AG04449 (cell line): ENCODE measurements at regions of chr9 and their contacts with region 1.

Region 1: GRCh38 chr9:70602321-70603019 is 188.0 kb upstream of the KLF9 start:
- DNase-seq: peak; percentile 61
- H3K4me3 ChIP-seq: no peak overlapping the region; the same call in 1 of the 2 replicates
- CTCF ChIP-seq: peak; percentile 64

Region 2: GRCh38 chr9:70318002-70318401 is 284.5 kb before region 1 on chr9:
- CTCF ChIA-PET with region 1: interaction called, 10 read pairs
- POLR2A ChIA-PET with region 1: no interaction called
- DNase-seq: no peak
- H3K4me3 ChIP-seq: no peak overlapping the region
- CTCF ChIP-seq: no peak

Region 3: GRCh38 chr9:70347046-70347445 is 255.4 kb before region 1 on chr9:
- CTCF ChIA-PET with region 1: interaction called, 29 read pairs
- POLR2A ChIA-PET with region 1: interaction called, 3 read pairs
- DNase-seq: no peak
- H3K4me3 ChIP-seq: no peak overlapping the region
- CTCF ChIP-seq: no peak

Region 4: GRCh38 chr9:70405808-70406433 is 196.5 kb before region 1 on chr9:
- CTCF ChIA-PET with region 1: interaction called, 13 read pairs
- POLR2A ChIA-PET with region 1: interaction called, 3 read pairs
- DNase-seq: no peak
- H3K4me3 ChIP-seq: no peak overlapping the region
- CTCF ChIP-seq: no peak

Region 5: GRCh38 chr9:70455993-70456704 is 146.3 kb before region 1 on chr9:
- CTCF ChIA-PET with region 1: no interaction called
- POLR2A ChIA-PET with region 1: no interaction called
- DNase-seq: no peak
- H3K4me3 ChIP-seq: no peak overlapping the region
- CTCF ChIP-seq: no peak

Region 6: GRCh38 chr9:70484210-70485130 is 118.0 kb before region 1 on chr9:
- CTCF ChIA-PET with region 1: interaction called, 21 read pairs
- POLR2A ChIA-PET with region 1: no interaction called
- DNase-seq: no peak
- H3K4me3 ChIP-seq: no peak overlapping the region
- CTCF ChIP-seq: peak; percentile 74